ENCODE measurements at regions of chr18 and their contacts with region 1.

Region 1: GRCh38 chr18:58043491-58044379 is at the start of gene NEDD4L:
- DNase-seq: peak; percentile 81 to 91 (median 81)
- ATAC-seq: peak; percentile 85 to 94 (median 92)
- H3K4me3 ChIP-seq: peak within 1 kb of the TSS; percentile 65 to 89 (median 82)
- H3K27ac ChIP-seq: peak within 1 kb of the TSS in 11 of 12 donors; percentile 46 to 82 (median 67)
- H3K4me1 ChIP-seq: peaks cover 0 to 23% (median 7%) of the 10 kb centered on the region in 12 donors
- H3K27me3 ChIP-seq: peaks cover 0 to 12% (median 0%) of the 10 kb centered on the region in 9 donors
- CTCF ChIP-seq: peak; percentile 74 to 94 (median 83)
- POLR2A ChIP-seq: no peak
- total RNA-seq, gene NEDD4L: 33.8 to 64.1 (median 54.9) TPM

Region 2: GRCh38 chr18:57621246-57621604 is 422.5 kb before region 1 on chr18:
- intact Hi-C with region 1: loop called in 5 of 10 experiments (anchors 10 kb)
- DNase-seq: no peak
- ATAC-seq: peak; percentile 4 to 57 (median 49)
- H3K4me3 ChIP-seq: peak overlapping the region; percentile 60 to 93 (median 84)
- H3K27ac ChIP-seq: peak overlapping the region; percentile 58 to 96 (median 88)
- H3K4me1 ChIP-seq: peaks cover 0 to 38% (median 17%) of the 10 kb centered on the region in 12 donors
- H3K27me3 ChIP-seq: no peaks in the 10 kb centered on the region
- CTCF ChIP-seq: no peak
- POLR2A ChIP-seq: no peak

Region 3: DNA sequence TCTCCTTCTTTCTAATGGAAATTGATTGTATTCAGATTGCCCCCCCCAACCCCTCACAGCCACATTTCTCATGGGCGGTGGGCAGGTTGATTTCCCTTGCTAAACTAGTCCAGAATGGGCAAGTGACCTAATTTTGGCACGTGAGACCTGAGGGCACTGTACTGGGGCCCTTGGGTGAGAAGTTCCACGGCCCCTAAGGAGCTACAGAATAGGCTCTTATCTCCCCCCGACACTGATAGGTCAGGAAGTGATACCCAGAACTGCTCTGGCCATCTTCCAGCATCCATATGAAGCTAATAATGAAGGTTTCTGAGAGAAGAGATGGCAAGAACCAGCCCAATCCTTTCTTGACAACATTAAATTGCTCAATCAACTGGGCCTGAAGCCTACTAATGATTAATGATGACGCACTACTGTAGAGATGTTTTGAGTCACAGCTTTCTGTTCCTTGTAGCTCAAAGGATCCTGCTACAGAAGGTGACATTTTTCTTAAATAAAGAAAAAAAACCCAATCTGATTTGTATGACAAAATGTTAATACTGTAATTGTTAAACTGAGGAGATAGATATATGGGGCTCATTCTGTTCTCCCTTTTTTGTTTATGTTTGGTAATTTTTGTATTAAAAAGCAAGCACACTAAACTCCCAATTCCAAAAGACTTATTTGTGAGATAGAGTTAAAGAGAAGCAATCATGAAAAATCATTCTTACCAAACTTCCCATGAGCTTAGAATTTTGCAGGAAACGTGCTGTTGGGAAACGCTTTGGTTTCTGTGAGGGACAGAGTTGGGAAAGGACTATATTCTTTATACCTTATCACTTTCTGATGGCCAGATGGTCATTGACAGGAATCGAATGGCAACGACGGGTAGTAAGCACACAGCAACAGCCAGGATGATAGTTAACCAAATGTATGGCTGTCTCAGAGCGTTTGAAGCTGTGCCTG is 393.9 kb before region 1 on chr18:
- intact Hi-C with region 1: loop called in 1 of 10 experiments (anchors 10 kb)
- DNase-seq: no peak
- ATAC-seq: peak; percentile 57 to 86 (median 63)
- H3K4me3 ChIP-seq: no peak overlapping the region
- H3K27ac ChIP-seq: peak overlapping the region in 2 of 12 donors; percentile 3 to 77
- H3K4me1 ChIP-seq: peaks cover 0 to 15% (median 0%) of the 10 kb centered on the region in 12 donors
- H3K27me3 ChIP-seq: no peaks in the 10 kb centered on the region
- CTCF ChIP-seq: no peak
- POLR2A ChIP-seq: no peak

Region 4: DNA sequence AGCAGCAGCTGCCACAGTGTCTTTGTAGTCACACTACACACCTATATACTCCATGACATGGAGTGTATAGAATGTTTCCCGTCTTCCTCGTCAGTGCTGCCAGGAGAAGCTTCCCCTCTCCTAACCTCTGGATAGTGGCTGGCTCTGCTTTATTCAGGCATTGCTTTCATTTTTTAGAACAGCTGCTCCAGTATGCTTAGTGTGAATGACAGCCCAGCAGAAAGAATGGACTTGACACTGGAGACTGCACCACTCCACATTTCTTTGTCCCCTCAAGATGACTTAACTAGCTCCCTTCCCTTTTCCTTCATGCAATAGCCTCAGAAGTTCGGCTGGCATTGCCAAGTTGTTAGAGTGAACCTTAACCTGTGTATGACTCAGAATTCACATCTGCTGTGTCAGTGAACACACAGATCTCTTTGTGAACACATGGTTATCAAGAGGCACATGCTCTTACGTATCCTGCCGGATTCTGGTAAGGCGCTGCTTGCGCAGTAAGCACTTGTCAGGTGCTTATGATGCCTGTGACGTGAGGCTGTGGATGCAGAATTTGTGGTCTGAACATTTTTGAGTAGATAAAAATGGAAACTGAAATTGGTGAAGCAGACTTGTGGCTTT is 74.2 kb after region 1 on chr18:
- intact Hi-C with region 1: loop called (anchors 1 to 5 kb)
- DNase-seq: no peak
- ATAC-seq: peak in 3 of 4 donors; percentile 68 to 80 (median 77)
- H3K4me3 ChIP-seq: no peak overlapping the region
- H3K27ac ChIP-seq: no peak overlapping the region
- H3K4me1 ChIP-seq: peaks cover 0 to 6% (median 0%) of the 10 kb centered on the region in 12 donors
- H3K27me3 ChIP-seq: no peaks in the 10 kb centered on the region
- CTCF ChIP-seq: no peak
- POLR2A ChIP-seq: no peak

Region 5: GRCh38 chr18:58135701-58136331 is 92.1 kb after region 1 on chr18:
- intact Hi-C with region 1: loop called in 2 of 10 experiments (anchors 5 kb)
- DNase-seq: peak in 3 of 5 donors; percentile 29 to 38 (median 33)
- ATAC-seq: peak; percentile 29 to 83 (median 60)
- H3K4me3 ChIP-seq: no peak overlapping the region
- H3K27ac ChIP-seq: no peak overlapping the region
- H3K4me1 ChIP-seq: peaks cover 0 to 7% (median 0%) of the 10 kb centered on the region in 12 donors
- H3K27me3 ChIP-seq: no peaks in the 10 kb centered on the region
- CTCF ChIP-seq: peak; percentile 67 to 87 (median 80)
- POLR2A ChIP-seq: no peak

Region 6: DNA sequence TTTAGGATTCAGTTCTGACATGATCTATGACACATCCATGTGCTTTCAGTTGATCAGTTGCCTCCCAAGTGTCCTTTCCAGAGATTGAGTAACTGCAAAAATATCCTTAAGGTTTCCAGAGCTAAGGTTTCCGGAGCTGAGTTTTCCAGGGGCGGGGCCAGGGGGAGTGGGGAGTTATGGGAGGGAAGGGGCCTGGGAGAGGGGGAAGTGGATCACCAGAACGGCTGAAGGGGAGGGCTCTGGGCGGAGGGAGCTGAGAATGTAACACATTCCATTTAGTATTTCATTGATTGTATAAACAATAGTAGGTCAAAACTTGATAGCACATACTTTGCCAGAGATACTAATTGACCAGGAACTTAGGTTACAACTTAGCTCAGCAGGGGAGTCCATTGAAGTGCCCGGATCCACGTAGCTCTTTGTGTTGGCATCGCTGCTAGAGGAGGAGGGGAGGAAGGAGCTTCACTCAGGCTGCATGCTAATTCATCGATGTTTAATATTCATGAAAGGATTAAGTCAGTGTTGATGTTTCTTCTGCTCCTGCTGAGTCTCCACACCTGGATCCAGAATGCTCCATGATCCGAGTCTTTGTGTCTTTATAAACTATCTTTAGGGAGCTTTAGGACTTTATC is 295.3 kb after region 1 on chr18:
- intact Hi-C with region 1: loop called in 1 of 10 experiments (anchors 10 kb)
- DNase-seq: no peak
- ATAC-seq: peak in 3 of 4 donors; percentile 10 to 20 (median 15)
- H3K4me3 ChIP-seq: no peak overlapping the region
- H3K27ac ChIP-seq: peak overlapping the region in 2 of 12 donors; percentile 56 to 73
- H3K4me1 ChIP-seq: peaks cover 0 to 28% (median 10%) of the 10 kb centered on the region in 12 donors
- H3K27me3 ChIP-seq: no peaks in the 10 kb centered on the region
- CTCF ChIP-seq: no peak
- POLR2A ChIP-seq: no peak